WTC11 (cell line): ENCODE measurements at regions of chr19 and their contacts with region 1.

Region 1: GRCh38 chr19:12757544-12758274 is 6.1 kb downstream of the BEST2 start:
- DNase-seq: peak; percentile 91
- ATAC-seq: peak; percentile 88
- H3K4me3 Mint-ChIP-seq: peak overlapping the region; percentile 59
- H3K27ac Mint-ChIP-seq: peak overlapping the region; percentile 63; the same call in 1 of the 2 replicates
- H3K4me1 Mint-ChIP-seq: peaks cover 2% of the 10 kb centered on the region; the same call in 1 of the 2 replicates
- H3K27me3 Mint-ChIP-seq: peaks cover 26% of the 10 kb centered on the region
- CTCF ChIP-seq: peak; percentile 96

Region 2: DNA sequence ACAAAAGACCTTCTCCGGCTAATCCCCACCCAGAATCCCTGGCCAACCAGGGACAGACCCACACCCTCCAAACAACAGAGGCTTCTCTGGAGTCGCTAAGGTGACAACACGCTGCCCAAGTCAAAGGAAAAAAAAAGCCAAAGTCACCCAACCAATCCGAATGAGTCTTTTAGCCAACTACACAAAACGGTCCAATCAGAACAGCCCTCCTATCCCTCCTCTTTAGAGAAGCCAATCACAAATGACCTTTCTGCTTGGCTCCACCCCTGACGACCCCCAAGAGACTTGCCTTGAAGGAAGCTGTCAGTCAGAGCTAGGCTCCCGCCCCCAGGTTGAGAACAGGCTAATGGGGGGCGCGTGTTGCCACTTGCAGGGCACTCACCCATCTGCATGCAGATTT is 54.7 kb before region 1 on chr19:
- CTCF ChIA-PET with region 1: interaction called, 11 read pairs
- POLR2A ChIA-PET with region 1: no interaction called
- DNase-seq: peak; percentile 88
- ATAC-seq: peak; percentile 96
- H3K4me3 Mint-ChIP-seq: no peak overlapping the region
- H3K27ac Mint-ChIP-seq: peak overlapping the region; percentile 94
- H3K4me1 Mint-ChIP-seq: peaks cover 4% of the 10 kb centered on the region
- H3K27me3 Mint-ChIP-seq: no peaks in the 10 kb centered on the region; the same call in 1 of the 2 replicates
- CTCF ChIP-seq: no peak

Region 3: GRCh38 chr19:12722566-12723380 is 34.9 kb before region 1 on chr19:
- CTCF ChIA-PET with region 1: interaction called, 35 read pairs
- POLR2A ChIA-PET with region 1: interaction called, 4 read pairs
- DNase-seq: peak; percentile 96
- ATAC-seq: peak; percentile 69
- H3K4me3 Mint-ChIP-seq: peak overlapping the region; percentile 93
- H3K27ac Mint-ChIP-seq: peak overlapping the region; percentile 99
- H3K4me1 Mint-ChIP-seq: peaks cover 23% of the 10 kb centered on the region
- H3K27me3 Mint-ChIP-seq: no peaks in the 10 kb centered on the region
- CTCF ChIP-seq: no peak

Region 4: DNA sequence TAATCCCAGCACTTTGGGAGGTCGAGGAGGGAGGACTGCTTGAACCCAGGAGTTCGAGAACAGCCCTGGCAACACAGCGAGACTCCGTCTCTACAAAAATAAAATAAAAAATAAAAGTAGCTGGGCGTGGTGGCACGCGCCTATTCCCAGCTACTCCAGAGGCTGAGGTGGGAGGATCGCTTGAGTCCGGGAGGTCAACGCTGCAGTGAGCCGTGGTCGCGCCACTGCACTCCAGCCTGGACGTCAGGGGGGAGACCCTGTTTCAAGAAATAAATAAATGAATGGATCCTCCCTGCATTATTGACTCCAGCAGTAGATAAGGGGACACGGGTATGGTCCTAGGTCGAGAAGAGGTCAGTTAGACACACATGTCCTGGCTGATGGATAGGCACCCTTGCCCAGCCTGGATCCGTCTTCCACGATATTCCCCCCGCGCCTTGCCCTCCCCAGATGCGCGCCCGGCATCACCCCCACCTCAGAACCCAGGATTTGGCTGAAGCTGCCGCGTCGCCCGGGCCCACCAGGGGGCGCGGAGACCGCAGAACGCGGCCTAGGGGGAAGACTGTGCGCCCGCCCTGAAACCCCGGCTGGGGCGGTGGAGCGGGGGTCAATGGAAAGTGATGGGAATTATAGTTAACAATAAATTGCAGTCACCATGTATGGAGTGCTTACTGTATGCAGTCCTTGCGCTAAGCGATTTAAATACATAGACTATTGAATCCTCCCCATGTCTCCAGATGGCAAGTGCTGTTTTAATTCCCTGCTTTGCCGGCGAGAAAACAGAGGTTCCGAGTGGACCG is 19.7 kb after region 1 on chr19:
- CTCF ChIA-PET with region 1: interaction called, 97 read pairs
- POLR2A ChIA-PET with region 1: interaction called, 7 read pairs
- DNase-seq: peak; percentile 91
- ATAC-seq: peak; percentile 39
- H3K4me3 Mint-ChIP-seq: peak overlapping the region; percentile 79
- H3K27ac Mint-ChIP-seq: peak overlapping the region; percentile 49
- H3K4me1 Mint-ChIP-seq: peaks cover 21% of the 10 kb centered on the region
- H3K27me3 Mint-ChIP-seq: no peaks in the 10 kb centered on the region; the same call in 1 of the 2 replicates
- CTCF ChIP-seq: peak; percentile 74

Region 5: DNA sequence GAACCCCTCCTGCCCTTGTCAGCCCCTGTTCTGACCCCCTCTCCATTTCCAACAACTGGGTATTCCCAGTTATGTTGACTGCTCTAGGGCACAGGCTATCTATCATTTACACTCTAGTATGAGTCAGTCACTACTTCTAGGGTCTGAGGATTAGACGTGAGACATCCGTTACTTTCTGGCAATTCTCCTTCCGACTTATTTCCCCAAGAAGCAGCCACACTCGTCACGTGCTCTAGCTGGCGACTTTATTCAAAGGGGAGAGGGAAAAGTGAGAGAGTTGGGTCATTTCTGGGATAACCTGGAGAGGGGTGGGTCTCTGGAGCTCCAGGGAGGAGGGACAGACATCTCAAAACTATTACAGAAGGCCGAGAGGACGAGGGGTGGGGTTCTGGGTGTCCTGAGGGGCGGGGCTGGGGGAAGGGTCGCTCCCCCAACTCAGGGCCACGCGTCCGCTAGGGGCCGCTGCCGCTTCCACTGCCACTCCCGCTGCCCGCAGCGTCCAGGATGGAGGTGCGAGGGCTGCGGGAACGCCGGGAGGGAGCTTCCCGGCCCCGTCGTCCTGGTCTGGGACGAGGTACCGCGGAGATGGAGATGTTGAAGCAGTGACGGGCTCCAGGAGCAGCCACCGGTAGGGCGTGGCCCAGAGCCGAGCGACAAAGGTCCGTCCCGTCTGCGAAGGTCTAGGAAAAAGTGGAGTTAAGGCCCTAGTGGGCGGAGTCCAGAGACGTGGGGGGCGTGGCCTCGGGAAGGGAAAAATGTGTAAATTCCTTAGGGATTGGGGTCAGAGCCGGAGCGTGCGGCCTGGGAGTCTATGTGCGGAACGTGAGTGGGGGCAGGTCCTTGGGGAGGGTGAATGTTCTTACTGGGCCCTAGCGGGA is 67.8 kb after region 1 on chr19:
- CTCF ChIA-PET with region 1: interaction called, 26 read pairs
- POLR2A ChIA-PET with region 1: interaction called, 3 read pairs
- DNase-seq: peak; percentile 94
- ATAC-seq: peak; percentile 85
- H3K4me3 Mint-ChIP-seq: peak overlapping the region; percentile 77
- H3K27ac Mint-ChIP-seq: peak overlapping the region; percentile 89
- H3K4me1 Mint-ChIP-seq: peaks cover 21% of the 10 kb centered on the region
- H3K27me3 Mint-ChIP-seq: peaks cover 31% of the 10 kb centered on the region
- CTCF ChIP-seq: peak; percentile 60

Region 6: GRCh38 chr19:12858041-12858928 is 100.6 kb after region 1 on chr19:
- CTCF ChIA-PET with region 1: no interaction called
- POLR2A ChIA-PET with region 1: no interaction called
- DNase-seq: no peak
- ATAC-seq: peak; percentile 63
- H3K4me3 Mint-ChIP-seq: no peak overlapping the region
- H3K27ac Mint-ChIP-seq: no peak overlapping the region
- H3K4me1 Mint-ChIP-seq: no peaks in the 10 kb centered on the region
- H3K27me3 Mint-ChIP-seq: 0 out of 2 replicates have a peak, but pooled peaks cover 2% of the 10 kb centered on the region
- CTCF ChIP-seq: no peak

Region 7: DNA sequence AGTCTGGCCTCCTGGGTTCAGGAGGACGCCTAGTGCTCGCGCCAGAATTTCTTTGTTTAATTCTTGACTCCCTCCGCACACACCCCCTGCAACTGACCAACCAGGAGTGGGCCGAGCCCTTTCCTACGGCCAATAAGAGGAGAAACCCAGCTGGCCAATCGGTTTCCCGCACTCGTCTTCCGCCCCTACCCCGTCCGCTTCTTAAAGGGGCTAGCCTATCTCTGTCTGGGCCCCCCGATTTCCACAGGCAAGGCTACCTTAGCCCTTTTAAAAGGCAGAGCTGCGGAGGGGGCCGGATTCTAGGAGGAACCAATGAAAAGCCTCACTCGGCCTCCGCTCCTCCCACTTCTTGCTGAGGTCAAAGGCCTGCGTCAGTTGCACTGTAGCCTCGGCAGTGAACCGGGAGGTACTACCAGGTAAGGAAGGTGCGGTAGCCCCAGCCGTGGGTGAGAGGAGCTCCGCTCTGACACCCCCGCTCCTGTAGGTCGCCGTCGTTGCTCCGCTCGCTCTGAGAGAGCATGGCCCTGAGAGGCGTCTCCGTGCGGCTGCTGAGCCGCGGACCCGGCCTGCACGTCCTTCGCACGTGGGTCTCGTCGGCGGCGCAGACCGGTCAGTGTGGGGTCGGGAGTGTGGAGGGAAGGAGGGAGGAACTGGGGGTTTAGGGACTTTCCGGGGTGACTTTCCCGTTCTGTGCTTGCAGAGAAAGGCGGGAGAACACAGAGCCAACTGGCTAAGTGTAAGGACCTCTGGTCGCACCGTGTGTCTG is 133.3 kb after region 1 on chr19 and contains the start of gene GCDH:
- CTCF ChIA-PET with region 1: interaction called, 20 read pairs
- POLR2A ChIA-PET with region 1: interaction called, 4 read pairs
- DNase-seq: peak; percentile 98
- ATAC-seq: peak; percentile 96
- H3K4me3 Mint-ChIP-seq: peak within 1 kb of the TSS; percentile 99
- H3K27ac Mint-ChIP-seq: peak within 1 kb of the TSS; percentile 96
- H3K4me1 Mint-ChIP-seq: peaks cover 22% of the 10 kb centered on the region
- H3K27me3 Mint-ChIP-seq: peaks cover 20% of the 10 kb centered on the region
- CTCF ChIP-seq: no peak
- total RNA-seq, gene GCDH: 58.6 to 69.0 TPM (median 59.8 TPM) in 3 replicates